Caco-2 (cell line): ENCODE measurements at regions of chr2 and their contacts with region 1.

Region 1: GRCh38 chr2:127197475-127198385 is 22.4 kb downstream of the CYP27C1 start:
- DNase-seq: peak; percentile 85 to 88
- H3K4me3 ChIP-seq: peak overlapping the region; percentile 35
- H3K4me3 Mint-ChIP-seq: peak overlapping the region; percentile 80
- H3K27ac Mint-ChIP-seq: peak overlapping the region; percentile 18
- H3K4me1 ChIP-seq: no peaks in the 10 kb centered on the region
- H3K4me1 Mint-ChIP-seq: no peaks in the 10 kb centered on the region
- H3K27me3 ChIP-seq: no peaks in the 10 kb centered on the region
- H3K27me3 Mint-ChIP-seq: no peaks in the 10 kb centered on the region
- CTCF ChIP-seq: peak; percentile 79 to 97

Region 2: DNA sequence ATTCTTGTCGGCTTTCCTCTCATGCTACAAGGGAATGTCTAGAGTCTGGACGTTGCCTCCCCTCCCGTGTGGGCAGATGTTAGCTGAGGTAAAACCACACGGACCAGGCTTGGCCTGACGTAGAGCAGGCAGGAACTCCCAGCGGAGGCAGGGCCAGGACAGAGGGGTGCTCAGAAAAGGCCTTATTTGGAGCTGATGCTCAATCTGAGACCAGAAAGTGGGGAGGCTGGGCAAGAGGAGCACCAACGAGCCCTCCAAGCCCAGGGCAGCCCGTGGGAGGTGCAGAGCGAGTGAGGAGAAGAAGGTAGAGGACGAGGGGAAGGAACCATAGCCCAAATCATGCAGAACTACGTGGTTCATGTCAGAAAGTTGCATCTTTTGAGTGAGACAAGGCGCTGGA is 290.1 kb before region 1 on chr2:
- CTCF ChIA-PET with region 1: no interaction called
- POLR2A ChIA-PET with region 1: no interaction called
- intact Hi-C with region 1: no loop called
- DNase-seq: no peak
- H3K4me3 ChIP-seq: no peak overlapping the region
- H3K4me3 Mint-ChIP-seq: no peak overlapping the region
- H3K27ac Mint-ChIP-seq: peak overlapping the region; percentile 30
- H3K4me1 ChIP-seq: no peaks in the 10 kb centered on the region
- H3K4me1 Mint-ChIP-seq: no peaks in the 10 kb centered on the region
- H3K27me3 ChIP-seq: no peaks in the 10 kb centered on the region
- H3K27me3 Mint-ChIP-seq: peaks cover 10% of the 10 kb centered on the region
- CTCF ChIP-seq: no peak

Region 3: GRCh38 chr2:127293748-127294562 is 96.2 kb after region 1 on chr2 and contains the start of gene ERCC3:
- CTCF ChIA-PET with region 1: interaction called, 29 read pairs
- POLR2A ChIA-PET with region 1: no interaction called
- intact Hi-C with region 1: loop called (anchors 5 kb)
- DNase-seq: peak; percentile 85 to 87
- H3K4me3 ChIP-seq: peak within 1 kb of the TSS; percentile 71
- H3K4me3 Mint-ChIP-seq: peak within 1 kb of the TSS; percentile 83
- H3K27ac Mint-ChIP-seq: peak within 1 kb of the TSS; percentile 88
- H3K4me1 ChIP-seq: peaks cover 9% of the 10 kb centered on the region
- H3K4me1 Mint-ChIP-seq: peaks cover 14% of the 10 kb centered on the region
- H3K27me3 ChIP-seq: no peaks in the 10 kb centered on the region
- H3K27me3 Mint-ChIP-seq: no peaks in the 10 kb centered on the region
- CTCF ChIP-seq: no peak
- total RNA-seq, gene ERCC3: 50.5 and 52.5 TPM in 2 replicates

Region 4: GRCh38 chr2:127324635-127325034 is 126.9 kb after region 1 on chr2:
- CTCF ChIA-PET with region 1: interaction called, 4 read pairs
- POLR2A ChIA-PET with region 1: no interaction called
- intact Hi-C with region 1: loop called (anchors 1 kb)
- DNase-seq: peak in 1 of 2 experiments; percentile 48
- H3K4me3 ChIP-seq: no peak overlapping the region
- H3K4me3 Mint-ChIP-seq: no peak overlapping the region
- H3K27ac Mint-ChIP-seq: no peak overlapping the region
- H3K4me1 ChIP-seq: no peaks in the 10 kb centered on the region
- H3K4me1 Mint-ChIP-seq: no peaks in the 10 kb centered on the region
- H3K27me3 ChIP-seq: no peaks in the 10 kb centered on the region
- H3K27me3 Mint-ChIP-seq: no peaks in the 10 kb centered on the region
- CTCF ChIP-seq: peak; percentile 67 to 79

Region 5: GRCh38 chr2:127453392-127454171 is 255.9 kb after region 1 on chr2:
- CTCF ChIA-PET with region 1: interaction called, 11 read pairs
- POLR2A ChIA-PET with region 1: no interaction called
- intact Hi-C with region 1: loop called (anchors 1 kb)
- DNase-seq: peak; percentile 36 to 48
- H3K4me3 ChIP-seq: no peak overlapping the region
- H3K4me3 Mint-ChIP-seq: peak overlapping the region; percentile 6
- H3K27ac Mint-ChIP-seq: peak overlapping the region; percentile 18
- H3K4me1 ChIP-seq: peaks cover 40% of the 10 kb centered on the region
- H3K4me1 Mint-ChIP-seq: peaks cover 36% of the 10 kb centered on the region
- H3K27me3 ChIP-seq: no peaks in the 10 kb centered on the region
- H3K27me3 Mint-ChIP-seq: no peaks in the 10 kb centered on the region
- CTCF ChIP-seq: peak in 1 of 2 experiments; percentile 25

Region 6: GRCh38 chr2:127649684-127650040 is 451.9 kb after region 1 on chr2:
- CTCF ChIA-PET with region 1: interaction called, 11 read pairs
- POLR2A ChIA-PET with region 1: no interaction called
- intact Hi-C with region 1: loop called (anchors 2 kb)
- DNase-seq: peak; percentile 87 to 90
- H3K4me3 ChIP-seq: no peak overlapping the region
- H3K4me3 Mint-ChIP-seq: no peak overlapping the region
- H3K27ac Mint-ChIP-seq: no peak overlapping the region
- H3K4me1 ChIP-seq: peaks cover 11% of the 10 kb centered on the region
- H3K4me1 Mint-ChIP-seq: no peaks in the 10 kb centered on the region
- H3K27me3 ChIP-seq: no peaks in the 10 kb centered on the region
- H3K27me3 Mint-ChIP-seq: no peaks in the 10 kb centered on the region
- CTCF ChIP-seq: peak; percentile 82 to 86